Dorsolateral prefrontal cortex (tissue), 120 donors: ENCODE measurements at regions of chr3 and their contacts with region 1.

Region 1: DNA sequence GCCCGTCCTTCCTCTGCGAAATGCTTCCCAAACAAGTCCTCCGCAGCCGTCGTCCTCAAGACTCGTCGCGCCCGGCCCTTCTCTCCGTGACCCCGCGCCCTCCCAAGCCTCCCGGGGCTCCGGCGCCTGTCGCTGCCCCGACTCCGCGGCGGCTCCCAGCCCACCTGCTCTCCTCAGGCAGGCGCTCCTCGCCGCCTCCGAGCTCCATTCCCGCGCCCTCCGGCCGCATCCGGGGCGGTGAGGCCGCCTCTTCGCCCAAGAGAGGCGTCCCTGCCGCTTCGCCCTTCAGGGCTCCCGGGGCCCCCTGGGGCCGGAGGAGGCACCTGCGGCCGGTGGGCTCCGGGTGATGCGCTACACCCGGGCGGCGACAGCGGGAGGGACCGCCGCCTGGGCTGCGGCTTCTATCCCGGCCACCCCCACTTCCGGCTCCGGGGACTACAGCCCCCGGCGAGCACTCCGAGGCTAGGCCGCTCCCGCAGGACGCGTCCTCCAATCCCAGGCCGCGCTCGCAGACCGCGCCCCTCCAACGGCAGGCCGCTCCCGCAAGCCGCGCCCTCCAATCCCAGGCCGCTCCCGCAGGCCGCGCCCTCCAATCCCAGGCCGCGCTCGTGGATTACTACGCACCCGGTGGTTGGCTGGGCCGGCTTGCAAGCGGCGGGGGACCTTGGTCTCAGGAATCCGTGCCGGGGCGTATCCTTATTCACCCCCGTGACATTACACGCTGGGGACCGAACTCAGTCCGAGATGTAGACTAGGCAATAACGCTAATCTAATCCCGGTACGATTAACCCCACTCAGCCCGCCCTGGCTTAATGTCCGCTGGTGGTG is at the start of gene RUBCN:
- DNase-seq: peak; percentile 87 to 98 (median 95)
- H3K4me3 ChIP-seq: peak within 1 kb of the TSS; percentile 68 to 99 (median 93)
- H3K27ac ChIP-seq: peak within 1 kb of the TSS; percentile 44 to 96 (median 87)
- H3K27me3 ChIP-seq: no peaks in the 10 kb centered on the region
- CTCF ChIP-seq: peak in 35 of 56 donors; percentile 6 to 58 (median 29)
- total RNA-seq, gene RUBCN: 53.9 to 114 (median 81.9) TPM

Region 2: DNA sequence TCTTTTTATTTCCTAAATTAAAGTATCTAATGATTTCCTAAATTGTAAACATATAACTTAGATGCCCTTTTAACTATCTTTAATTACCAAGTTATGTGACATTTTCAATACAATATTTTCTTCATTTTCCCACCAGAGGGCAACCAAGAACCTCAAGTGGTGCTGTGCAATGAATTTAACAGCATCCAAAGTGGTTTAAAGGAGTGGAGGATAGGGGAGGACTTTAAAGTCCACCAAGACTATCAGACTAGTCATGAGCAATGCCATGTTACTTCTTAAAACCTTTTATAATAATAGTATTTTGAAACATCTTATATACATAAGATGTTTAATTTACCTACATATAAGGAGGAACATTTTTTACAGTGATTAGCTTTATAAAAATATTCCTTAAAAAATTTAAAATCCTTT is 512.7 kb before region 1 on chr3:
- intact Hi-C with region 1: no loop called
- DNase-seq: no peak
- H3K4me3 ChIP-seq: peak overlapping the region in 1 of 59 donors; percentile 17
- H3K27ac ChIP-seq: peak overlapping the region in 16 of 59 donors; percentile 3 to 62 (median 22)
- H3K27me3 ChIP-seq: no peaks in the 10 kb centered on the region
- CTCF ChIP-seq: peak; percentile 49 to 89 (median 72)

Region 3: GRCh38 chr3:197567904-197568681 is 168.6 kb before region 1 on chr3:
- intact Hi-C with region 1: no loop called
- DNase-seq: no peak
- H3K4me3 ChIP-seq: peak overlapping the region in 34 of 59 donors; percentile 1 to 47 (median 16)
- H3K27ac ChIP-seq: peak overlapping the region in 57 of 59 donors; percentile 2 to 91 (median 77)
- H3K27me3 ChIP-seq: no peaks in the 10 kb centered on the region
- CTCF ChIP-seq: peak in 3 of 56 donors; percentile 8 to 14 (median 14)

Region 4: DNA sequence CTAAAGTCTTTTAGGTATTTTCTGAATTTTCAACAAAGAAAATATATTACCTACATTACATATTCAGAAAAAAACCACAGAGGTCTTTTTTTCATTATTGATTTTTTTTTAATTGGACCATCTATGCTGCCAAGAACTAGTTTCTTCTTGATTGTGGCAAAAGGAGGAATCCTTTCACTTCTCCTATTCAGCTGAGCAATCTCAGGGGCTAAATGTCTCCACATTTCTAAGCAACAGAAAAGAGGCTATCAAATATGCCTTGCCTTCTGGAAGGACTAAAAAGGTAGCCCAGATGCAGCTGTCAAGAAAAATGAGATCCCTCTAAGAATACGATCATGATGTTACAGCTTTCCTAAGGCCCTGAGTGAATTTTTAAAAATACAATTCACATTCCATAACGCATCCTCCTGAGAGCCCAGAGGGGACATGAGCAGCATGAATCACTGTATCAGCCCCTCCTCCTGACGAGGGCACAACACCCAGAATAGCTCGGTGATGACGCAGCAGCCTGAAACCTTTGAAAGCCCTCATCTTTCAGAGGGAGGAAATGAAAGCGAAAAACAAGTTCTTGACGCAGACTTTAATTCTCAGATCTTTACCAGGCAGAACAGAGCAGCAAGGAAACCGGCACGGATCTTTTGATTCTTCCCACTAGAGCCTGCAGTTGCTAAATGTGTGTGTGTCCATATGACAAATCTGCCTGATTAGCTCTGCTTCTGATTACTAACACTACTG is 24.6 kb before region 1 on chr3:
- intact Hi-C with region 1: loop called in 1 of 2 experiments (anchors 2 kb)
- DNase-seq: peak; percentile 51 to 94 (median 85)
- H3K4me3 ChIP-seq: peak overlapping the region; percentile 26 to 67 (median 51)
- H3K27ac ChIP-seq: peak overlapping the region; percentile 76 to 98 (median 94)
- H3K27me3 ChIP-seq: no peaks in the 10 kb centered on the region
- CTCF ChIP-seq: peak in 10 of 56 donors; percentile 5 to 37 (median 14)

Region 5: GRCh38 chr3:197791113-197791891 is 54.6 kb after region 1 on chr3 and contains the start of gene LRCH3:
- intact Hi-C with region 1: loop called in 1 of 2 experiments (anchors 2 kb)
- DNase-seq: peak; percentile 60 to 88 (median 72)
- H3K4me3 ChIP-seq: peak within 1 kb of the TSS; percentile 69 to 98 (median 90)
- H3K27ac ChIP-seq: peak within 1 kb of the TSS; percentile 68 to 98 (median 94)
- H3K27me3 ChIP-seq: no peaks in the 10 kb centered on the region
- CTCF ChIP-seq: peak in 21 of 56 donors; percentile 5 to 45 (median 18)
- total RNA-seq, gene LRCH3: 42.2 to 98.1 (median 64.6) TPM